ENCODE measurements at regions of chr3 and their contacts with region 1.

Region 1: DNA sequence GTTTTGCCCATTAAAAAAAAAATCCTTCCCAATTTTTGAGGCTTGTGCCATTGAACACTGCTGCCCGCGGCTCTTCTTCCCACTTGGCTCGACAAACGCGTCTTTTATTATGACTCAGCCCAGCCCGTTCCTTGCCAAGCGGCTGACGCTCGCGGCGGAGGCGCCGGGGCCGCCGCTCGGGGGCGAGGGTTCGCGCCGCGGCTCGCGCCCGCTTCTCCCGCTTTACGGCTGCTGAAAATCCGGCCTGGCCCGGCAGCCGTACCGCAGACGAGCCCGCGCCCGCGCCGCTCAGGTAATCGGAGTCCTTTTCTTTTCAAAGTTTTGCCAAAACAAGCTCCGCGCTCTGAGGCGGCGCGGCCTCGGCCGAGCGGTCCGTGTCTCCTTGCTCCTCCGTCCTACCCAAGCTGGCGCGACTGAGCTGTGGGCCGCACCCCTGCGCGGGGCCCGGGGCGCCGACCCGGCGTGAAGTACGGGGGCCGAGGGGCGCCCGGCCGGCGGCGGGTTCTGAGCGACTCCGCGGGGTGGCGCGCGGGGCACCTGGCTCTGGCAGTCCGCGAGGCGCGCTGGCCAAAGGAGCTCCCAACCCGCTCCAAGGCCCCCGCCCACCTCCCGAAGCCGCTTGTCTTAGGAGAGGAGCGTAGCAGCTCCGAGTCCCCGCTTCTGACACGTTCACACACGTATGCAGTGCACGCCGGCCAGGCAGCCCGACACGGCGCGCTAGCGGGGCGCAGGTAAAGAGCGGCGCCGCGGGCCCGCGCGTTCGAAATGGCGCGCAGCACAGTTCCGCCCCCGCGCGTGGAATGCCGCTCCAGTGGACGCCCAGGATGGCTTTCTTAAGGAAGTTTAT is 418.2 kb upstream of the NAALADL2 start:
- DNase-seq: peak; percentile 77
- H3K27ac ChIP-seq: peak overlapping the region; percentile 100
- CTCF ChIP-seq: peak; percentile 23

Region 2: GRCh38 chr3:174089592-174089991 is 351.4 kb before region 1 on chr3:
- CTCF ChIA-PET with region 1: no interaction called
- POLR2A ChIA-PET with region 1: no interaction called
- DNase-seq: no peak
- H3K27ac ChIP-seq: no peak overlapping the region
- CTCF ChIP-seq: no peak

Region 3: GRCh38 chr3:174287705-174288104 is 153.3 kb before region 1 on chr3:
- CTCF ChIA-PET with region 1: no interaction called
- POLR2A ChIA-PET with region 1: no interaction called
- DNase-seq: no peak
- H3K27ac ChIP-seq: no peak overlapping the region
- CTCF ChIP-seq: no peak

Region 4: GRCh38 chr3:175178816-175179454 is 738.0 kb after region 1 on chr3:
- CTCF ChIA-PET with region 1: no interaction called
- POLR2A ChIA-PET with region 1: interaction called, 12 read pairs
- DNase-seq: no peak
- H3K27ac ChIP-seq: no peak overlapping the region
- CTCF ChIP-seq: no peak